Left lung (tissue), 14 donors: ENCODE measurements at regions of chr1 and their contacts with region 1.

Region 1: DNA sequence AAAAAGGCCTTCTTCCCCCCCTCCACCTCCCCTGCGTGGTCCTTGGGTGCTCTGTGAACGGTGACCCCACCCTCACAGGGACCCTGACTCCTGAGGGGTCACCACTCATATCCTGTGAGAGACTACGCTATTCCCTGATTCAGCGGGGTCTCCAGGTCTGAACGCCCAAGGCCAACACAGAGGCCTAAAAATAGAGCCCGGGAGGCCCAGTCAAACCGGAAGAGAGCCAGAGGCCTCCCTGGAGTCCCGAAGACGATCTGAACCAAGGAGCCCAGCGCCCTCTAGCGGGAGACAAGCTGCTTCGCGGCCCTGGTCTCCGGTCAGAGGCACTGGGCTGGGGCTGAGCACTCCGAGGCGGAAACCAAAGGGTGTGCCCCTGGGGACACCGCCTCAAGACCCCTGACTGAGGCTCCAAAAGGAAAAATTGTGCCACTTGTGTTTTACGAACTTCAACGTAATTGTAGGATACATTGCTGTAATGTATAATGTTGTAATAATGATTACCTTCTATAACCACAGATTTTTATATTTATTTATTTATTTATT is 42.4 kb upstream of the PSEN2 start:
- DNase-seq: peak; percentile 81 to 98 (median 95)
- ATAC-seq: peak; percentile 100
- H3K4me3 ChIP-seq: peak overlapping the region in 1 of 2 donors; percentile 8
- H3K27ac ChIP-seq: peak overlapping the region; percentile 68 to 81
- H3K4me1 ChIP-seq: peaks cover 9 to 19% of the 10 kb centered on the region in 2 donors
- H3K27me3 ChIP-seq: no peaks in the 10 kb centered on the region
- CTCF ChIP-seq: peak; percentile 93 to 98

Region 2: GRCh38 chr1:226634166-226634588 is 193.9 kb before region 1 on chr1:
- intact Hi-C with region 1: loop called (anchors 5 kb)
- DNase-seq: peak; percentile 56 to 95 (median 76)
- ATAC-seq: peak; percentile 91
- H3K4me3 ChIP-seq: no peak overlapping the region
- H3K27ac ChIP-seq: peak overlapping the region in 1 of 2 donors; percentile 18
- H3K4me1 ChIP-seq: peaks cover 0 to 11% of the 10 kb centered on the region in 2 donors
- H3K27me3 ChIP-seq: no peaks in the 10 kb centered on the region
- CTCF ChIP-seq: peak; percentile 90 to 91

Region 3: GRCh38 chr1:226736908-226737818 is 90.9 kb before region 1 on chr1:
- intact Hi-C with region 1: loop called in 1 of 2 experiments (anchors 5 kb)
- DNase-seq: peak; percentile 34 to 88 (median 53)
- ATAC-seq: peak; percentile 37
- H3K4me3 ChIP-seq: peak overlapping the region; percentile 68 to 90
- H3K27ac ChIP-seq: peak overlapping the region; percentile 85 to 90
- H3K4me1 ChIP-seq: peaks cover 29 to 61% of the 10 kb centered on the region in 2 donors
- H3K27me3 ChIP-seq: no peaks in the 10 kb centered on the region
- CTCF ChIP-seq: no peak

Region 4: DNA sequence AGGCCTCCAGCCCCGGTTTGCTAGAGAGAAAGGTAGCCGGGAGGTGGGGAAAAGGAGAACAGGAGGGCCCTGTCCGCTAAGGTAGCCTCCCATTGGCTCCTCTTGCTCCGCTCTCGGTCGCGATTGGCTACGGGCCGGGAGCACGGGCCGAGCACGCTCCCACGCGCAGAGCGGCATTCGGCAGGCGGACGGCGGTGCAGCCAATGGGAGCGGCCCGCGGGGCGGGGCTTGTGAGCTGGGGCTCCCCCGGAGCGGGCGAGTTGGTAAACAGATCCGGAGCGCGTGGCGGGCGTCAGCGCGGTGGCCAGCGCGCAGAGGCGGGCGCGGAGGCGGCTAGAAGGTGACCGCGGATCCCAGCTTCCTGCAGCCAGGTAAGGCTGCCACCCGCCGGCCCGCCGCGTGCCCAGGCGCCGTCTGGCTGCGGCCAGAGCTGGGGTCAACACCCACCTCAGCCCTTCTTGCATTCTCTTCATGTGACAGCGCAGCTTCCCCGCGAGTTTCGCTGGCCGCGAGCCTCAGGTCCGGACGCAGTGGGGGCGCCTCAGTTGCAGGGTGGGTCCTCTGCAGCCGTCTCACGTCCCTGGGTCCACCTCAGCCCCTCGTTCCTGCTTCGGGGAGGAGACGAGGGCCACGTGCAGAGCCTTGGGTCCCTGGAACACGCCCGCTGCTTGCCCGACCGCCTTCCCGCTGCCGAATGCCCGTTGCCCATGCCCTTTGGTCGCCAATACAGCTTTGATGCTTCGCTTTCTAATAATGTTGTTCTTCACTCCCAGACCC is 112.2 kb after region 1 on chr1 and contains the start of gene COQ8A:
- intact Hi-C with region 1: no loop called
- DNase-seq: peak; percentile 97 to 100 (median 99)
- ATAC-seq: peak; percentile 97
- H3K4me3 ChIP-seq: peak within 1 kb of the TSS; percentile 76 to 79
- H3K27ac ChIP-seq: peak within 1 kb of the TSS; percentile 96 to 100
- H3K4me1 ChIP-seq: peaks cover 8 to 41% of the 10 kb centered on the region in 2 donors
- H3K27me3 ChIP-seq: no peaks in the 10 kb centered on the region
- CTCF ChIP-seq: no peak
- polyA plus RNA-seq, gene COQ8A: 26.6 to 41.5 (median 33.1) TPM